RWPE1 (cell line): ENCODE measurements at regions of chr3 and their contacts with region 1.

Region 1: GRCh38 chr3:132343018-132343612 is 25.9 kb downstream of the ACP3 start:
- DNase-seq: peak; percentile 30
- H3K27ac ChIP-seq: no peak overlapping the region
- CTCF ChIP-seq: peak; percentile 78

Region 2: GRCh38 chr3:132256989-132257388 is 86.1 kb before region 1 on chr3:
- CTCF ChIA-PET with region 1: interaction called, 26 read pairs
- POLR2A ChIA-PET with region 1: no interaction called
- DNase-seq: peak; percentile 14
- H3K27ac ChIP-seq: no peak overlapping the region
- CTCF ChIP-seq: peak; percentile 27

Region 3: DNA sequence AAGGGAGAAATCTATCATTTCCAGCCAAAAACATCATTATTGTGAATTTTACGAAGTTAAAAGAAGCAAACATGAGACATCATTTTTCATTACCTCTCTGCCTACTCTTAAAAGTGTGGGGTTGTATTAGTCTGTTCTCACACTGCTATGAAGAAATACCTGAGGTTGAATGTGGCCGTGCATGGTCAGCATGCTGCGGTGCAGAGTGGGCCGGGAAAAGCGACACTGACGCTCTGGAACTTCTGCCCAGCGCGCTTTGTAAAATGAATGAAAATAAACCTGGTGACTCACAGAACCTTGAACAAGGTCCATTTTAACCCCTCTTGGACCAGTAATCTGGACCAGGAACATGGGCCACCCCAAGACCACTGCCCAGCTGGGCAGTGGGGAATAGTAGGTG is 43.1 kb after region 1 on chr3:
- CTCF ChIA-PET with region 1: no interaction called
- POLR2A ChIA-PET with region 1: no interaction called
- DNase-seq: no peak
- H3K27ac ChIP-seq: no peak overlapping the region
- CTCF ChIP-seq: no peak